ENCODE measurements at regions of chr15 and their contacts with region 1.

Region 1: GRCh38 chr15:84588053-84588874 is 12.5 kb upstream of the ZSCAN2 start:
- DNase-seq: peak; percentile 80 to 81 (median 80)
- H3K4me3 ChIP-seq: no peak overlapping the region
- H3K4me3 Mint-ChIP-seq: peak overlapping the region in 7 of 8 donors; percentile 19 to 77 (median 38)
- H3K27ac ChIP-seq: no peak overlapping the region
- H3K27ac Mint-ChIP-seq: peak overlapping the region in 4 of 7 donors; percentile 3 to 50 (median 31)
- H3K4me1 ChIP-seq: peaks cover 4% of the 10 kb centered on the region
- H3K4me1 Mint-ChIP-seq: peaks cover 0 to 5% (median 2%) of the 10 kb centered on the region in 4 donors
- H3K27me3 ChIP-seq: no peaks in the 10 kb centered on the region
- H3K27me3 Mint-ChIP-seq: peaks cover 0 to 5% of the 10 kb centered on the region in 2 donors

Region 2: GRCh38 chr15:84600851-84601838 is 12.9 kb after region 1 on chr15 and contains the start of gene ZSCAN2:
- CTCF ChIA-PET with region 1: interaction called, 26 read pairs
- POLR2A ChIA-PET with region 1: no interaction called
- intact Hi-C with region 1: no loop called
- DNase-seq: peak; percentile 89 to 94 (median 91)
- H3K4me3 ChIP-seq: peak within 1 kb of the TSS; percentile 85 to 93
- H3K4me3 Mint-ChIP-seq: peak within 1 kb of the TSS; percentile 91 to 99 (median 96)
- H3K27ac ChIP-seq: peak within 1 kb of the TSS; percentile 59
- H3K27ac Mint-ChIP-seq: peak within 1 kb of the TSS; percentile 83 to 96 (median 92)
- H3K4me1 ChIP-seq: peaks cover 50% of the 10 kb centered on the region
- H3K4me1 Mint-ChIP-seq: peaks cover 47 to 77% (median 64%) of the 10 kb centered on the region in 4 donors
- H3K27me3 ChIP-seq: no peaks in the 10 kb centered on the region
- H3K27me3 Mint-ChIP-seq: no peaks in the 10 kb centered on the region
- total RNA-seq, gene ZSCAN2: 11.4 to 14.1 TPM

Region 3: GRCh38 chr15:84748274-84749110 is 160.2 kb after region 1 on chr15 and contains the start of gene ZNF592:
- CTCF ChIA-PET with region 1: interaction called, 4 read pairs
- POLR2A ChIA-PET with region 1: no interaction called
- intact Hi-C with region 1: loop called (anchors 5 kb)
- DNase-seq: peak; percentile 78 to 87 (median 80)
- H3K4me3 ChIP-seq: peak within 1 kb of the TSS; percentile 88 to 93
- H3K4me3 Mint-ChIP-seq: peak within 1 kb of the TSS; percentile 93 to 99 (median 98)
- H3K27ac ChIP-seq: peak within 1 kb of the TSS; percentile 80
- H3K27ac Mint-ChIP-seq: peak within 1 kb of the TSS; percentile 97 to 99 (median 99)
- H3K4me1 ChIP-seq: peaks cover 68% of the 10 kb centered on the region
- H3K4me1 Mint-ChIP-seq: peaks cover 52 to 74% (median 64%) of the 10 kb centered on the region in 4 donors
- H3K27me3 ChIP-seq: no peaks in the 10 kb centered on the region
- H3K27me3 Mint-ChIP-seq: no peaks in the 10 kb centered on the region
- total RNA-seq, gene ZNF592: 40.8 to 42.6 TPM

Region 4: GRCh38 chr15:84761607-84762131 is 173.4 kb after region 1 on chr15:
- CTCF ChIA-PET with region 1: no interaction called
- POLR2A ChIA-PET with region 1: no interaction called
- intact Hi-C with region 1: no loop called
- DNase-seq: peak in 4 of 5 donors; percentile 12 to 30 (median 20)
- H3K4me3 ChIP-seq: no peak overlapping the region
- H3K4me3 Mint-ChIP-seq: no peak overlapping the region
- H3K27ac ChIP-seq: peak overlapping the region; percentile 35
- H3K27ac Mint-ChIP-seq: no peak overlapping the region
- H3K4me1 ChIP-seq: peaks cover 66% of the 10 kb centered on the region
- H3K4me1 Mint-ChIP-seq: peaks cover 4 to 26% (median 16%) of the 10 kb centered on the region in 4 donors
- H3K27me3 ChIP-seq: no peaks in the 10 kb centered on the region
- H3K27me3 Mint-ChIP-seq: no peaks in the 10 kb centered on the region

Region 5: DNA sequence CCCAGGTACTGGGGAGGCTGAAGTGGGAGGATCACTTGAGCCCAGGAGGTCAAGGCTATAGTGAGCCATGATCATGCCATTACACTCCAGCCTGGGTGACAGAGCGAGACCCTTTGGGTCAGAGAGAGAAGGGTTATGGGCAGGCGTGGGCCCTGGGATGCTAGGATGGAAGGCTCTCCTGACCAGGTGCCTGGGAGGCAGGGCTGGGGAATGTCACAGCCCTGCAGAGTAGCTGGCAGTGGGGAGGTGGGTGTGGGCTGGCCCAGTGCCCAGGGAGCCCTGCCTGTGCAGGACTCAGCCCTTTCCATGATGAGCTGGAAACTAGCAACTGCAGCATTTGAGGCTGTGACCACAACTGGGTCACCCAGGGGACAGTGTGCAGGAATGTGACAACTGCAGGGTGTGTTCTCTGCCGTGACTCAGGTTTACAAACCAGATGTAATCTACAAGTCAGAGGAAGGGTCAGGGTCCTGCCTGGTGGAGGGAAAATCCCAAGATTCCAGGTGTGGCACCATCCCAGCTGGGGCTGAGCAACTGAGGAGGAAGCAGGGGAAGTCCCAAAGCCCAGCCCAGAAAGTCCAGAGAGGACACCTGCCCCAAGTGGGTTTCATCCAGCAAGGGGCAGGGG is 341.6 kb after region 1 on chr15:
- CTCF ChIA-PET with region 1: interaction called, 94 read pairs
- POLR2A ChIA-PET with region 1: interaction called, 3 read pairs
- intact Hi-C with region 1: loop called (anchors 1 kb)
- DNase-seq: no peak
- H3K4me3 ChIP-seq: no peak overlapping the region
- H3K4me3 Mint-ChIP-seq: no peak overlapping the region
- H3K27ac ChIP-seq: no peak overlapping the region
- H3K27ac Mint-ChIP-seq: peak overlapping the region in 1 of 7 donors; percentile 68
- H3K4me1 ChIP-seq: no peaks in the 10 kb centered on the region
- H3K4me1 Mint-ChIP-seq: peaks cover 4 to 6% (median 5%) of the 10 kb centered on the region in 4 donors
- H3K27me3 ChIP-seq: no peaks in the 10 kb centered on the region
- H3K27me3 Mint-ChIP-seq: no peaks in the 10 kb centered on the region